ENCODE measurements at regions of chr9 and their contacts with region 1.

Region 1: DNA sequence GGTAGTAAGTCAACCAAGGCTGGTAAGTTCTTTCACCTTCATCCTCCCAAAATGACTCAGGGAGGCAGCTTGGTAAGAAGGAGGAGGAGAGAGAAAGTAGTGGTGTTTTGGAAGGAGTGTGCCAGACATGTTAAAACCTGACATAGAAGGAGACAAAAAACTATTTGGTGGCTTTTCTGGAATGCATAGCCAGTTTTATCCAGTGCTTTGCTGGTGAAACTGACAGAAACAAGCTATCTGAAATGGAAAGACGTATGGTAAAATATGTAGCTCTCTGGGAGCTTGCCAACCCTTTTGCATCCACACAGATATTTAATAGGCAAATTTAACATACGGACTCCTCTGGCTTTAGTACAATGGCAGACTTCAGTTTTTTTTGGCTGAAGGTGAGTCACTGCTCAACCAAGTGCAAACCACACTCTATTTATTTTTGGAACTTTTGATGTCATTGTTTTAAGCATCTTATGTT is 45.4 kb downstream of the RAB14 start:
- DNase-seq: peak; percentile 35
- ATAC-seq: peak; percentile 84
- H3K4me3 Mint-ChIP-seq: no peak overlapping the region
- H3K27ac Mint-ChIP-seq: peak overlapping the region; percentile 87
- H3K4me1 Mint-ChIP-seq: peaks cover 46% of the 10 kb centered on the region
- H3K27me3 Mint-ChIP-seq: no peaks in the 10 kb centered on the region

Region 2: DNA sequence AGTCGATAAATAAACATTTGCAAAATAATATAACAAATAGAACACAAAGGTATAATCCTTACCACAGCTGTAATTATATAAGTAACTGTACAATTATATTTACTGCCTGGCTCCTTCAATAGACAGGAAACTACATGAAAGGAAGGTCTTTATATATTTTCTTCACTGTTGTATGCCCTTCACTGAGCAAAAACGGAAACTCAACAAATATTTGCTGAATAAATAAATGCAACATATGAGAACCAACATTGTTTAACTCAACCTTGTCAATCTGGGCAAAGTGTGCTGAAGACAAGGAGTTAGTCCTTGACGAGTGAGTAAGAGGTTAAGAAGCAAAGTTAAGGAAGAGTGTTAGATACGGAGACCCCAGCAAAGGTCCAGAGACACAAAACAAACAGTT is 336.2 kb before region 1 on chr9:
- CTCF ChIA-PET with region 1: no interaction called
- POLR2A ChIA-PET with region 1: no interaction called
- DNase-seq: no peak
- ATAC-seq: no peak
- H3K4me3 Mint-ChIP-seq: no peak overlapping the region
- H3K27ac Mint-ChIP-seq: no peak overlapping the region
- H3K4me1 Mint-ChIP-seq: no peaks in the 10 kb centered on the region
- H3K27me3 Mint-ChIP-seq: no peaks in the 10 kb centered on the region

Region 3: DNA sequence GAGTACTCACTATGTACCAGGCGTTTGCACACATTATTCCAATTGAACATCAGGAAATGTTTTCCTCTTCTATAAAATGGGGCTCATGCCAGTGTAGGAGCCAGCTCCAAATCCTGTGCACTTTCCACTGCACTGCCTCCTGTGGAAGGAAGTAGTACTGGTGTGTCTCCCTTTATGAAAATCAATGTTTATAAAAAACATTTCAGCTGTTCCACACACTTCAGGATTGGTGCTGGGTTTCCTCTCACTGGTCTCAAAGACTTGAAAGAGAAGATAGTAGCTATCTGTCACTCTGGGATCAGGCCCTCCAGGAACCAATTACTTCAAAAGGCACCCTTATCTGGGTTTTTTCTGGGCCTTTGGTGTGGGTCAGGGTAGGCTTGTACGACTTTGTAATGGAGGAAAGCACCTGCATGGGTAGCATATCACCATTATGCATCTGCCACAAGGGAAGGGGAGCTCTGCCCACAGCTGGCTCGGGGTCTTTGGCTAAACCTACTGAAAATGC is 12.9 kb after region 1 on chr9:
- CTCF ChIA-PET with region 1: interaction called, 44 read pairs
- POLR2A ChIA-PET with region 1: interaction called, 3 read pairs
- DNase-seq: peak; percentile 39
- ATAC-seq: peak; percentile 83
- H3K4me3 Mint-ChIP-seq: no peak overlapping the region
- H3K27ac Mint-ChIP-seq: peak overlapping the region; percentile 62
- H3K4me1 Mint-ChIP-seq: peaks cover 18% of the 10 kb centered on the region
- H3K27me3 Mint-ChIP-seq: no peaks in the 10 kb centered on the region